HEK293 (cell line): ENCODE measurements at regions of chr1 and their contacts with region 1.

Region 1: GRCh38 chr1:6224718-6225117 is 11.0 kb downstream of the ICMT start:
- H3K4me3 ChIP-seq: no peak overlapping the region
- H3K27ac ChIP-seq: no peak overlapping the region
- H3K4me1 ChIP-seq: no peaks in the 10 kb centered on the region
- CTCF ChIP-seq: no peak

Region 2: GRCh38 chr1:6205849-6206519 is 18.7 kb before region 1 on chr1 and contains the start of gene RNF207:
- CTCF ChIA-PET with region 1: interaction called, 13 read pairs
- POLR2A ChIA-PET with region 1: interaction called, 5 read pairs
- H3K4me3 ChIP-seq: peak within 1 kb of the TSS; percentile 63
- H3K27ac ChIP-seq: peak within 1 kb of the TSS; percentile 52; the same call in 1 of the 2 replicates
- H3K4me1 ChIP-seq: no peaks in the 10 kb centered on the region
- CTCF ChIP-seq: no peak

Region 3: DNA sequence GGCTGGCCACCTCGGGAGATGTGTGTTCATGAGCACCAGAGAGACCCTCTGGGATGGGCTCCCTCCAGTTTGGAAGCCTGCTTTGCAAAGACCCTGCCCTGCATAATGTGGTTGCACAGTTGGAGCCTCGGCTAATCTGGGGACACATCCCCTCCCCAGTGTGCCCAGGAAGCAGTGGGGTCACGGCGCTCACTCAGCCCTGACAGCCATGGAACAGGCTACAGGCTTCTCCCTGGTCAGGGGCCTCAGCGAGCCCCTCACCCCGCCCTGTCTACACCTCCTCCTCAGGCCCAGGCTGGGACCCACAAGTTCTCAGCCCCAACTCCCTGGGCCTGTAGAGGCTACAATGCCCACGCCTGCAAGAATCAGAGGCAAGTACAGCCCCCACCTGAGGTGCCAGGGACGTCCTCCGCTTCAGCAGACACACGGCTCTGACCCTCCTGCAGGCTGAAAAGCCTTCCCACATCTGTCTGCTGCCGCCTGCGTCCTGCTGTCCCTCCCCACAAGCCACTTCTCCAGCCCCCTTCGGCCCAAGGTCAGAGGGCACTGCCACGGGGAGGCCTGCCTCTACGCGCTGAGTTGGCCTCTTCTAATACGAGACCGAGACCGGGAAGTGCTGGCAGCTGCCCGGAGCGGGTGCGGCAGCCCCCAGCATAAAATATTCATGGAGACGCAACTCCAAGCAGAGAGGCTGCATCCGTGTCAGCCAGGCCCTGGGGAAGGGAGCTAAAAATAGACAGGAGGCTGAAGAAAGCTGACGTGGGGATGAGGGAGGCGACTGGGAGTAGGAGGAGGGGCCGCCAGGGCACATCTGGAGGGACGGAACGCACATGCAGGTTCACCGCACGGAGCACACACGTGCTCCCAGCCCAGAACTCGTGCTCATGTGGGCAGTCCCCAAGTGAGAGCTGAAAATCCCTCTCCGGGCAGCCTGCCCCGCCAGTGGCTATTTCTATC is 51.4 kb after region 1 on chr1:
- CTCF ChIA-PET with region 1: no interaction called
- POLR2A ChIA-PET with region 1: no interaction called
- H3K4me3 ChIP-seq: no peak overlapping the region
- H3K27ac ChIP-seq: no peak overlapping the region
- H3K4me1 ChIP-seq: peaks cover 22% of the 10 kb centered on the region
- CTCF ChIP-seq: no peak

Region 4: GRCh38 chr1:6300342-6301048 is 75.8 kb after region 1 on chr1:
- CTCF ChIA-PET with region 1: no interaction called
- POLR2A ChIA-PET with region 1: no interaction called
- H3K4me3 ChIP-seq: no peak overlapping the region
- H3K27ac ChIP-seq: no peak overlapping the region
- H3K4me1 ChIP-seq: no peaks in the 10 kb centered on the region
- CTCF ChIP-seq: no peak